CD4-positive, alpha-beta T cell (primary cell): ENCODE measurements at regions of chr1 and their contacts with region 1.

Region 1: DNA sequence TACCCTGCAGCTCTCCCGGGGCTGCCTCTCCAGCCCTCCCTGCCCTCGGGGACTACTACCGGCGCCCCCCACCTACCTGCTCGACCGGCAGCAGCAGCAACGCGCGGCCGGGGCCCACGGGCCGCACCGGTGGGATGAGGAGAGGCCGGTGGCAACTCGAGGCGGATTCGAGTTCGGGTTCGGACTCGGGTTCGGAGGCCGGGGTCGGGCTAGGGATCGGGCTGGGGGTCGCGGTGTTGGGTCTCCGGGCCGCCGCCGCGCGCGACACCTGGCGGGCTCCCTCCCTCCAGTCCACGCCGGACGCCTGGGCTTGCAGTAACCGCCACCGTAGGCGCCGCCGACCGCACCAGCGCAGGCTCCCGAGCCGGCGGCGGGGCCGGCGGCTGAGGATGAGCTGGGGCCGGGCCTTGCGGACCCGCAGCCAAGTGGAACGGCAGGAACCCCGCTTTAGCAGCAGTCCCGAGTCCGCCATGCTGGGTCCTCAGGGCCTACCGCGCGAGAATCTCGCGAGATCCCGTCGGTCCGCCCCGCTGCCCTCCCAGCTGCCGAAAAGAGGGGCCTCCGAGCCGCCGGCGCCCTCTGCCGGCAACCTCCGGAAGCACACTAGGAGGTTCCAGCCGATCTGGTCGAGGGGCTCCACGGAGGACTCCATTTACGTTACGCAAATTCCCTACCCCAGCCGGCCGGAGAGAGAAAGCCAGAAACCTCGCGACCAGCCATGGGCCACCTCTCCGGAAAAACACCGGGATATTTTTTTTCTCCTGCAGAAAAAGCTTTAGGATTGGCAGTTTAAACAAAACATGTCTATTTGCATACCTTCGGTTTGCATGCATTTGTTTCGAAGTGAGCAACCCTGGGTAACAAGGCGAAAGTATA is at the start of gene NOL9:
- DNase-seq: peak; percentile 91 to 97 (median 94)
- ATAC-seq: peak; percentile 98
- H3K4me3 ChIP-seq: peak within 1 kb of the TSS; percentile 94
- H3K4me3 Mint-ChIP-seq: peak within 1 kb of the TSS; percentile 85
- H3K27ac ChIP-seq: peak within 1 kb of the TSS; percentile 22 to 64
- H3K27ac Mint-ChIP-seq: peak within 1 kb of the TSS; percentile 70
- H3K4me1 ChIP-seq: peaks cover 30% of the 10 kb centered on the region
- H3K4me1 Mint-ChIP-seq: peaks cover 6% of the 10 kb centered on the region
- H3K27me3 ChIP-seq: no peaks in the 10 kb centered on the region
- H3K27me3 Mint-ChIP-seq: no peaks in the 10 kb centered on the region
- CTCF ChIP-seq: peak; percentile 93
- total RNA-seq, gene NOL9: 52.3 to 54.1 TPM

Region 2: DNA sequence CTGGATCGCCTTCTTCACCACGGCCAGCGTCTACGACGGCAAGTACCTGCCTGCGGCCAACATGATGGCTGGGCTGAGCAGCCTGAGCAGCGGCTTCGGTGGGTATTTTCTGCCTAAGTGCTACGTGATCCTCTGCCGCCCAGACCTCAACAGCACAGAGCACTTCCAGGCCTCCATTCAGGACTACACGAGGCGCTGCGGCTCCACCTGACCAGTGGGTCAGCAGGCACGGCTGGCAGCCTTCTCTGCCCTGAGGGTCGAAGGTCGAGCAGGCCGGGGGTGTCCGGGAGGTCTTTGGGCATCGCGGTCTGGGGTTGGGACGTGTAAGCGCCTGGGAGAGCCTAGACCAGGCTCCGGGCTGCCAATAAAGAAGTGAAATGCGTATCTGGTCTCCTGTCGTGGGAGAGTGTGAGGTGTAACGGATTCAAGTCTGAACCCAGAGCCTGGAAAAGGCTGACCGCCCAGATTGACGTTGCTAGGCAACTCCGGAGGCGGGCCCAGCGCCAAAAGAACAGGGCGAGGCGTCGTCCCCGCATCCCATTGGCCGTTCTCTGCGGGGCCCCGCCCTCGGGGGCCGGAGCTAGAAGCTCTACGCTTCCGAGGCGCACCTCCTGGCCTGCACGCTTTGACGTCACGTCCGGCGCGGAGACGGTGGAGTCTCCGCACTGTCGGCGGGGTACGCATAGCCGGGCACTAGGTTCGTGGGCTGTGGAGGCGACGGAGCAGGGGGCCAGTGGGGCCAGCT is 25.3 kb after region 1 on chr1 and contains the start of gene ZBTB48:
- CTCF ChIA-PET with region 1: interaction called, 13 read pairs
- POLR2A ChIA-PET with region 1: interaction called, 9 read pairs
- intact Hi-C with region 1: loop called in 1 of 2 experiments (anchors 1 kb)
- DNase-seq: peak; percentile 91 to 99 (median 96)
- ATAC-seq: peak; percentile 99
- H3K4me3 ChIP-seq: peak within 1 kb of the TSS; percentile 87
- H3K4me3 Mint-ChIP-seq: peak within 1 kb of the TSS; percentile 98
- H3K27ac ChIP-seq: peak within 1 kb of the TSS; percentile 79 to 82
- H3K27ac Mint-ChIP-seq: peak within 1 kb of the TSS; percentile 93
- H3K4me1 ChIP-seq: peaks cover 36% of the 10 kb centered on the region
- H3K4me1 Mint-ChIP-seq: peaks cover 34% of the 10 kb centered on the region
- H3K27me3 ChIP-seq: peaks cover 0 to 3% of the 10 kb centered on the region in 2 experiments
- H3K27me3 Mint-ChIP-seq: no peaks in the 10 kb centered on the region
- CTCF ChIP-seq: no peak
- total RNA-seq, gene ZBTB48: 31.4 to 31.7 TPM

Region 3: GRCh38 chr1:6613361-6614018 is 59.2 kb after region 1 on chr1 and contains the start of gene PHF13:
- CTCF ChIA-PET with region 1: interaction called, 11 read pairs
- POLR2A ChIA-PET with region 1: no interaction called
- intact Hi-C with region 1: loop called in 1 of 2 experiments (anchors 10 kb)
- DNase-seq: peak; percentile 97 to 100 (median 99)
- ATAC-seq: peak; percentile 94
- H3K4me3 ChIP-seq: peak within 1 kb of the TSS; percentile 65
- H3K4me3 Mint-ChIP-seq: peak within 1 kb of the TSS; percentile 98
- H3K27ac ChIP-seq: peak within 1 kb of the TSS; percentile 32 to 50
- H3K27ac Mint-ChIP-seq: peak within 1 kb of the TSS; percentile 90
- H3K4me1 ChIP-seq: peaks cover 18% of the 10 kb centered on the region
- H3K4me1 Mint-ChIP-seq: peaks cover 26% of the 10 kb centered on the region
- H3K27me3 ChIP-seq: no peaks in the 10 kb centered on the region
- H3K27me3 Mint-ChIP-seq: no peaks in the 10 kb centered on the region
- CTCF ChIP-seq: no peak
- total RNA-seq, gene PHF13: 4.0 to 4.9 TPM

Region 4: GRCh38 chr1:6646499-6647148 is 92.4 kb after region 1 on chr1:
- CTCF ChIA-PET with region 1: interaction called, 10 read pairs
- POLR2A ChIA-PET with region 1: interaction called, 5 read pairs
- intact Hi-C with region 1: loop called in 1 of 2 experiments (anchors 1 kb)
- DNase-seq: peak in 10 of 14 experiments; percentile 7 to 70 (median 19)
- ATAC-seq: peak; percentile 71
- H3K4me3 ChIP-seq: no peak overlapping the region
- H3K4me3 Mint-ChIP-seq: no peak overlapping the region
- H3K27ac ChIP-seq: no peak overlapping the region
- H3K27ac Mint-ChIP-seq: no peak overlapping the region
- H3K4me1 ChIP-seq: peaks cover 6% of the 10 kb centered on the region
- H3K4me1 Mint-ChIP-seq: peaks cover 6% of the 10 kb centered on the region
- H3K27me3 ChIP-seq: no peaks in the 10 kb centered on the region
- H3K27me3 Mint-ChIP-seq: no peaks in the 10 kb centered on the region
- CTCF ChIP-seq: peak; percentile 70

Region 5: DNA sequence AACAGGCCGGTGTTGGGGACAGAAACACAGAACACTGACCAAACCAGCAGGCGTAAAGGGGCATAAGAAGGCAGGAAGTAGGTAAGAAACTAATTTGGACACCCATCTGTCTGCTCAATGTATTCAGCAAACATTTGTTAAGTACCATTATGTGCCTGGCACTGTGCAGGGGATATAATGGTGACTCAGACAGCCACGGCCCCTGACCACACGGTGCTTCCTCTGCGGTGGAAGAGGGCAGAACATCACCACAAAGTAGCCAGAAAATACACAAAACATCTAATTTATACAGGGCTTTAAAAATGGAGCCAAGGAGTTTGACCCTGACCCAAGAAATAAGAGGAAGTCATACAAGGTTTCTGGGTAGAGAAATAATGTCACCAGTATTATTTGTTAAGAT is 134.5 kb after region 1 on chr1:
- CTCF ChIA-PET with region 1: no interaction called
- POLR2A ChIA-PET with region 1: no interaction called
- intact Hi-C with region 1: no loop called
- DNase-seq: no peak
- ATAC-seq: no peak
- H3K4me3 ChIP-seq: no peak overlapping the region
- H3K4me3 Mint-ChIP-seq: no peak overlapping the region
- H3K27ac ChIP-seq: no peak overlapping the region
- H3K27ac Mint-ChIP-seq: no peak overlapping the region
- H3K4me1 ChIP-seq: no peaks in the 10 kb centered on the region
- H3K4me1 Mint-ChIP-seq: peaks cover 11% of the 10 kb centered on the region
- H3K27me3 ChIP-seq: no peaks in the 10 kb centered on the region
- H3K27me3 Mint-ChIP-seq: no peaks in the 10 kb centered on the region
- CTCF ChIP-seq: no peak

Region 6: GRCh38 chr1:6784560-6785317 is 230.5 kb after region 1 on chr1:
- CTCF ChIA-PET with region 1: no interaction called
- POLR2A ChIA-PET with region 1: no interaction called
- intact Hi-C with region 1: loop called in 1 of 2 experiments (anchors 10 kb)
- DNase-seq: peak; percentile 96 to 100 (median 99)
- ATAC-seq: peak; percentile 23
- H3K4me3 ChIP-seq: peak overlapping the region; percentile 80
- H3K4me3 Mint-ChIP-seq: peak overlapping the region; percentile 97
- H3K27ac ChIP-seq: peak overlapping the region; percentile 88 to 92
- H3K27ac Mint-ChIP-seq: peak overlapping the region; percentile 89
- H3K4me1 ChIP-seq: peaks cover 25% of the 10 kb centered on the region
- H3K4me1 Mint-ChIP-seq: peaks cover 51% of the 10 kb centered on the region
- H3K27me3 ChIP-seq: no peaks in the 10 kb centered on the region
- H3K27me3 Mint-ChIP-seq: no peaks in the 10 kb centered on the region
- CTCF ChIP-seq: no peak

Region 7: DNA sequence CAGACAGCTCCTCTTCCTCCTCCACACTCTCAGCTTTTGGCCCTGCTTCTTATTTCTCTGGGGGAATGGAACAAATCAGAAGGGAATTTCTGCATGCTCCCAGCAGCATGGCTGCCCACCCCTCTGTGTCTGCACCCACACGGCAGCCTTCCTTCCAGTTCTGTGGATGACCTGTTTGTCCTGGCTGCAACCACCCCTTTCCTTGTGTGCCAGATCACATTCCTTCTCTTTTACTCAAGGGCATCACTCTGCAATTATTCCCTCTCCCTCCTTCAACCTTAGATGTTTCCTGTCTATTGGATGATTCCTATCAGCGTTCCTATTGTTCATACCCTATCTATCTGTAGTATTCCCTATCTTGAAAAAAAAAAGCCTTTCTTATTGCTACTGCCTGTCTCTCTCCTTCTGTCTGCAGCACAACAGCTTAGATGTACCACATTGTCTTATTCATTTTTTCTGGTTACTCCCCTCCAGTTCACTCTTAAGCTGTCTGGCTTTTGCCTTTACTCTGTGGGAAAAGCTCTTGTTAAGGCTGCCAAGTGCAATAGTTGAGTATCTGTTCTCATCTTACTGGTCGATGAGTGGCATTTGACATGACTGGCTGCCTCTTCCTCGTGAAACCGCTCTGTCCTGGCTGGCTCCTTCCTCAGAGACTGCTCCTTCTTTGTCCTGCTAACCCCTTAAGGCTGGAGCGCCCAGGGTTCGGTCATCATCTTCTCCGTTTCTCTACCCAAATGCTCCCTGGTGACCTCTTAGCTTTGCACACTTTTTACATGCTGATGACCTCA is 582.1 kb after region 1 on chr1:
- CTCF ChIA-PET with region 1: no interaction called
- POLR2A ChIA-PET with region 1: no interaction called
- intact Hi-C with region 1: no loop called
- DNase-seq: no peak
- ATAC-seq: no peak
- H3K4me3 ChIP-seq: no peak overlapping the region
- H3K4me3 Mint-ChIP-seq: no peak overlapping the region
- H3K27ac ChIP-seq: no peak overlapping the region
- H3K27ac Mint-ChIP-seq: no peak overlapping the region
- H3K4me1 ChIP-seq: no peaks in the 10 kb centered on the region
- H3K4me1 Mint-ChIP-seq: no peaks in the 10 kb centered on the region
- H3K27me3 ChIP-seq: peaks cover 6% of the 10 kb centered on the region in 2 experiments
- H3K27me3 Mint-ChIP-seq: peaks cover 36% of the 10 kb centered on the region
- CTCF ChIP-seq: no peak